Caco-2 (cell line): ENCODE measurements at regions of chr11 and their contacts with region 1.

Region 1: DNA sequence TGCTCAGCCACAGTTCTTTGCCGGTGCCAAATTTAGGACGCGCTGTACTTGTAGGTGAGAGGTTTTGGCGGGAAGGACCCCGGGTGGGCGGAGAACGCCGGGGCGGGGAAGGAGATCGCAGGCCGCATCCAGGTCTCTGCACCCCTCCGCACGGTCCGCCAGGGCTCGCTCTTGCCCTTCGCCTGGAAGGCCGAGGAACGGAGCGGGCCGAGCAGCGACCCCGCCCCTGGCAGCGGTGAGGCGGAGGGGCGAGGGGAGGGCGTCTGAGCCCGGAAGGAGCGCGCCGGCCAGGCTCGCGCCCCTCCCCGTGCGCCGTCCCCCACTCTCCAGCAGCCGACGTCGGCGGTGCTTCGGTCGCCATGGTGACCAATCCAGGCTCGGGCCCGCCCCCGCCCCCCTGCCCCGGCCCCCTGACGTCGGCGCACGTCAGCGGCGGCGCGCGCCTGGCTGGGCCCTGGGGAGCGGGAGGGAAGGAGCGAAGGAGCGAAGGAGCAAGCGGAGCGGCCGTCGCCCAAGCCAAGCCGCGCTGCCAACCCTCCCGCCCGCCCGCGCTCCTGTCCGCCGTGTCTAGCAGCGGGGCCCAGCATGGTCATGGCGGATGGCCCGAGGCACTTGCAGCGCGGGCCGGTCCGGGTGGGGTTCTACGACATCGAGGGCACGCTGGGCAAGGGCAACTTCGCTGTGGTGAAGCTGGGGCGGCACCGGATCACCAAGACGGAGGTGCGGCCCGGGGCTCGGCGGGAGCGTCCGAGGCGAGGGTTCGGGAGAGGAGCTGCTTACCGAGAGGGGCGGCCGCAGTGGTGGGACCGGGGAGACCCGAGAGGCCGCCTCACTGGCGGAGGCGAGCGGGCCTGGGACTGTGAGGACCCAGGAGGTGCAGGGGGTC is at the start of gene SIK2:
- DNase-seq: peak; percentile 99 to 100
- H3K4me3 ChIP-seq: peak within 1 kb of the TSS; percentile 87
- H3K4me3 Mint-ChIP-seq: peak within 1 kb of the TSS; percentile 97
- H3K27ac Mint-ChIP-seq: peak within 1 kb of the TSS; percentile 95
- H3K4me1 ChIP-seq: peaks cover 21% of the 10 kb centered on the region
- H3K4me1 Mint-ChIP-seq: peaks cover 29% of the 10 kb centered on the region
- H3K27me3 ChIP-seq: no peaks in the 10 kb centered on the region
- H3K27me3 Mint-ChIP-seq: peaks cover 5% of the 10 kb centered on the region
- CTCF ChIP-seq: peak; percentile 97 to 100
- total RNA-seq, gene SIK2: 37.3 and 40.2 TPM in 2 replicates

Region 2: GRCh38 chr11:111623527-111624030 is 21.4 kb after region 1 on chr11:
- CTCF ChIA-PET with region 1: interaction called, 17 read pairs
- POLR2A ChIA-PET with region 1: interaction called, 3 read pairs
- intact Hi-C with region 1: loop called (anchors 1 kb)
- DNase-seq: peak; percentile 95 to 98
- H3K4me3 ChIP-seq: no peak overlapping the region
- H3K4me3 Mint-ChIP-seq: peak overlapping the region; percentile 59
- H3K27ac Mint-ChIP-seq: peak overlapping the region; percentile 78
- H3K4me1 ChIP-seq: peaks cover 58% of the 10 kb centered on the region
- H3K4me1 Mint-ChIP-seq: peaks cover 52% of the 10 kb centered on the region
- H3K27me3 ChIP-seq: no peaks in the 10 kb centered on the region
- H3K27me3 Mint-ChIP-seq: no peaks in the 10 kb centered on the region
- CTCF ChIP-seq: no peak

Region 3: DNA sequence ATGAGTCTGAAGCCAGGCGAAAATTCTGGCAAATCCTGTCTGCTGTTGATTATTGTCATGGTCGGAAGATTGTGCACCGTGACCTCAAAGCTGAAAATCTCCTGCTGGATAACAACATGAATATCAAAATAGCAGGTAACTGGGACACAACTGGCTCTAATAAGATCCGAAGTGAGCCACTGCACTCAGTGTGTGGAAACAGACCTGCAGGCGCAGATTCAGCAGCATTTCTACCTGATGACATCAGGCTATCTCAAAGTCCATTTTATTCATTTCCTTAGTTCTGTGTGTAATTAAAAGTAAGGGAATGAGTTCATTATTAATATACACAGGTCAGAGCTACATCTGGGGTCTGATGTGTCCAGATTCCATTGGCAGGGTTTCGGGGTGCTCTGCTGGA is 85.8 kb after region 1 on chr11:
- CTCF ChIA-PET with region 1: no interaction called
- POLR2A ChIA-PET with region 1: no interaction called
- intact Hi-C with region 1: loop called (anchors 2 kb)
- DNase-seq: no peak
- H3K4me3 ChIP-seq: no peak overlapping the region
- H3K4me3 Mint-ChIP-seq: no peak overlapping the region
- H3K27ac Mint-ChIP-seq: no peak overlapping the region
- H3K4me1 ChIP-seq: 0 out of 2 replicates have a peak, but pooled peaks cover 3% of the 10 kb centered on the region
- H3K4me1 Mint-ChIP-seq: peaks cover 25% of the 10 kb centered on the region
- H3K27me3 ChIP-seq: no peaks in the 10 kb centered on the region
- H3K27me3 Mint-ChIP-seq: no peaks in the 10 kb centered on the region
- CTCF ChIP-seq: no peak

Region 4: GRCh38 chr11:111766093-111766833 is 164.0 kb after region 1 on chr11 and contains the start of gene PPP2R1B:
- CTCF ChIA-PET with region 1: interaction called, 9 read pairs
- POLR2A ChIA-PET with region 1: no interaction called
- intact Hi-C with region 1: loop called (anchors 1 kb)
- DNase-seq: peak; percentile 84 to 85
- H3K4me3 ChIP-seq: peak within 1 kb of the TSS; percentile 61
- H3K4me3 Mint-ChIP-seq: peak within 1 kb of the TSS; percentile 85
- H3K27ac Mint-ChIP-seq: peak within 1 kb of the TSS; percentile 84
- H3K4me1 ChIP-seq: peaks cover 10% of the 10 kb centered on the region
- H3K4me1 Mint-ChIP-seq: peaks cover 22% of the 10 kb centered on the region
- H3K27me3 ChIP-seq: no peaks in the 10 kb centered on the region
- H3K27me3 Mint-ChIP-seq: no peaks in the 10 kb centered on the region
- CTCF ChIP-seq: no peak
- total RNA-seq, gene PPP2R1B: 109 and 114 TPM in 2 replicates

Region 5: DNA sequence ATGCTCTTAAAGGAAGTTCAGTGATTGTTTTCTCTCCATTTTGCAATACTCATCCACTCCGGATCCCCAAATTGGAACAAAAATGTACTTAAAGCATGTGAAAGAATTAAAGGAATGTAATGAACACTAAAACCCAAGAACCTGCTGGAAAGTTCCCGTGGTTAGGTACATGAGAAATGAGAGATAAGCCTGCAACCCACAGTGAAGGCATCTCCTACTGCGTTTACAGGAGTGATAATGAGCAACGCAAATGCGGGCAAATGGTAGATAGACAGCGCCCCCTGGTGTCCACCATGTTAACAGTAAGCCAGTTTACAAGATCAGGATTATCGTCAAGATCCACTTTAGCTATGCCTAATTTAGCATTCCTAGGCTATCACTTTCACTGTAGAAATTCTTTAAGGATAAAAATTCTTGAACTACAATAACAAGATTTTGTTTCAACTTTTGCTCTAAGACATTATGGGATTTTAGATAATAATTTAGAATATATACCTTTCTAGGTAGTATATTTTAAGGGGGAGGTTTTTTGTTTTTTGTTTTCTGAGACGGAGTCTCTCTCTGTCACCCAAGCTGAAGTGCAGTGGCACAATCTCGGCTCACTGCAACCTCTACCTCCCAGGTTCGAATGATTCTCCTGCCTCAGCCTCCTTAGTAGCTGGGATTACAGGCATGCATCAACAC is 239.3 kb after region 1 on chr11:
- CTCF ChIA-PET with region 1: interaction called, 8 read pairs
- POLR2A ChIA-PET with region 1: no interaction called
- intact Hi-C with region 1: loop called (anchors 1 kb)
- DNase-seq: peak; percentile 91 to 94
- H3K4me3 ChIP-seq: no peak overlapping the region
- H3K4me3 Mint-ChIP-seq: no peak overlapping the region
- H3K27ac Mint-ChIP-seq: no peak overlapping the region
- H3K4me1 ChIP-seq: peaks cover 19% of the 10 kb centered on the region
- H3K4me1 Mint-ChIP-seq: peaks cover 20% of the 10 kb centered on the region
- H3K27me3 ChIP-seq: no peaks in the 10 kb centered on the region
- H3K27me3 Mint-ChIP-seq: no peaks in the 10 kb centered on the region
- CTCF ChIP-seq: peak; percentile 96 to 98